ENCODE measurements at regions of chr16 and their contacts with region 1.

Region 1: DNA sequence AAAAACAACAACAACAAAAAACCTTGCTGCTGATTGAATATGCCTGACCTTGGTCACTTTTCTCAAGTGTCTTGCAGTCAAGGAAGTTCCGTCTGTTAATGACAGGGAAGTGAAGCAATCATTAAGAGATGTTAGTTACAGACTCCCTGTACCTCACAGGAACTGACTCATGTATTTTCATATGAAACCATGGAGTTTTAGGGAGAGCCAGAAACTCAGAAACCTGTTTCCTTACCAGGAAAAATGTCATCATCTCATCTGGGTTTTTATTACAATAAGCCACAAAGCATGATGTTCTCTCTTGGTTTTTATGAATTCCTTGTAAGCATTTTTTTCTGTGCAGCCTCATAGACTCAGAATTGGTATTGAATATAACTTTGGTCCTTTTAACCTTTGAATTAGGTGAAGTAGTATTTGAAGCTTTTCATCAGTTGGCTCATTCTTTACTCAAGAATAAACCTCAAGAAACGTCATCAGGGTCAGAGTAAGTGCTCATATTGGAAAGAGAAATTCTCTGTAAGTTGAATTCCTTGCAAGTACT is 10.3 kb downstream of the LYRM1 start:
- DNase-seq: no peak
- ATAC-seq: peak; percentile 75

Region 2: DNA sequence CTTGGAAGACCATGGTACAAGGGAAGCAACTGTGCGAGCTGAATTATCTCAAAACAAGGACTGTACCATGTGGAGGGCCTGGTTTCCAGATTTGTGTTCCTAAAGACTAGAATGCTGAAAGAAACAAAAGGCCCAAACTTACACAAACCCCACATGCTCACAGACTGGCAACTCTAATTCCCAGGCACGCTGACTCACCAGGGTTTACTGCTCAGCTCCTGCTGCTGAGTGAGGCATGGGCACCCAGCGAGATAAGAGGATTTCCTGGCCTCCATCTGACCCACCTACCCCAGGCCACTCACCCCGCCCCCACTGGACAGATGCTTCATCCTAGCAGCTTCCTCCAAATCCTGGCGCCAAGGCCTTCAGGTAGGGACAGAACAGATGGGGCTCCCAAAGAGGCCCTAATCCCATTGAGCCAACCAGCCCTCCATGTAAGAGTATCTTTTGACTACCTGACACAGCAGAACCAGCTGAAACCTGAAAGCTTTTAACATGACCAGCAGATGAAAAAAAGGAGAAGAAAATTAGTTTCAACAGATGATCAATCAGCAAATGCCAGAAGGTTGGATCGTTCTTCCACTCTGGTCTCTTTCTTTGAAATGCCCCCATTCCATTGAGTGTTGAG is 44.6 kb before region 1 on chr16:
- intact Hi-C with region 1: loop called in 1 of 2 experiments (anchors 10 kb)
- DNase-seq: peak in 1 of 2 donors; percentile 42
- ATAC-seq: no peak

Measured in left colon (tissue), 2 donors.